ENCODE measurements at regions of chr3 and their contacts with region 1.

Region 1: GRCh38 chr3:148588291-148588690 is 109.4 kb upstream of the AGTR1 start:
- DNase-seq: no peak
- H3K4me3 ChIP-seq: no peak overlapping the region
- H3K27ac ChIP-seq: no peak overlapping the region
- H3K4me1 ChIP-seq: no peaks in the 10 kb centered on the region
- H3K27me3 ChIP-seq: no peaks in the 10 kb centered on the region
- CTCF ChIP-seq: no peak

Region 2: DNA sequence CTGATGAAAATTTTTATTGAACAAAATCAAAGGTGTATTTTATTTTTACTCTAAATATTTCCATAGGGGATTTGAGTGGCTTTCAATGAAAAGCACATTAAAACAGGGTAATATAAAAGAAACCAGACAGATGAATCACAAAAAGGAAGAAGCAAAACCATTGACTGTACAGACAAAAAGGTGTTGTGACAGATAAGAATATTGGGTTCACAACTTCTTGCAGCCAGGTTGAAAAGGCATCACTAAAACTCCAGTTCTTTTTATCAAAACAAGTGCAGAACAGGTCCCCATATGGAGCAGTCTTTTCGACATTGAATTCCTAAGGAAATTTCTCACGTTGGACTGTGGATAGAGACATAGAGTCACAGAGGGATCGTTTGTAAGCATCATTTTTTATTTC is 163.2 kb after region 1 on chr3:
- CTCF ChIA-PET with region 1: interaction called, 10 read pairs
- POLR2A ChIA-PET with region 1: no interaction called
- intact Hi-C with region 1: no loop called
- DNase-seq: no peak
- H3K4me3 ChIP-seq: no peak overlapping the region
- H3K27ac ChIP-seq: no peak overlapping the region
- H3K4me1 ChIP-seq: no peaks in the 10 kb centered on the region
- H3K27me3 ChIP-seq: no peaks in the 10 kb centered on the region
- CTCF ChIP-seq: no peak